Activated CD4-positive, alpha-beta T cell treated with anti-CD3 and anti-CD28 coated beads, Interleukin-2, amount 10 ng/mL, durations not matched to agents 7 days and 5 days (primary cell): ENCODE measurements at regions of chr19 and their contacts with region 1.

Region 1: GRCh38 chr19:6362027-6362350 is 658 bp downstream of the CLPP start:
- DNase-seq: no peak
- H3K4me3 Mint-ChIP-seq: peak overlapping the region; percentile 91
- H3K27ac Mint-ChIP-seq: peak overlapping the region; percentile 99
- H3K4me1 Mint-ChIP-seq: peaks cover 20% of the 10 kb centered on the region
- H3K27me3 Mint-ChIP-seq: no peaks in the 10 kb centered on the region

Region 2: DNA sequence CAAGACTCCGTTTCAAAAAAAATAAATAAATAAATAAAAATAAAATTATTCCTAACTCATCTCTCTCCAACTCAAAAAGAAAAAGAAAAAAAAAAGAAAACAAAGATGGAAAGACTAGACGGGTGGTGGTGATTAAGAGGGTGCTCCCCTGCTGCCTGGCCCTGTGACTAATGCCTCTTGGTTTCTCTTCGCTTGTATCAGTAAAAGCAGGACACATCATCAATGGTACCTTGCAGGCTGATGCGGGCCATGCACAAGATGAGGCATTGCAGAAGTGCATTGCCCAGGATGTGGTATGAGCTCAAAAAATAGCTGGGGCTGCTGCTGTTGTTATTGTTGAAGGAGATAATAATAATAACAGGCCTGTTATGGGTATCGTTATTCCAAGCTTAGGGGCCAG is 43.2 kb before region 1 on chr19:
- CTCF ChIA-PET with region 1: no interaction called
- POLR2A ChIA-PET with region 1: no interaction called
- DNase-seq: no peak
- H3K4me3 Mint-ChIP-seq: no peak overlapping the region
- H3K27ac Mint-ChIP-seq: no peak overlapping the region
- H3K4me1 Mint-ChIP-seq: no peaks in the 10 kb centered on the region
- H3K27me3 Mint-ChIP-seq: no peaks in the 10 kb centered on the region

Region 3: GRCh38 chr19:6340493-6341201 is 21.3 kb before region 1 on chr19:
- CTCF ChIA-PET with region 1: no interaction called
- POLR2A ChIA-PET with region 1: no interaction called
- DNase-seq: no peak
- H3K4me3 Mint-ChIP-seq: no peak overlapping the region
- H3K27ac Mint-ChIP-seq: no peak overlapping the region
- H3K4me1 Mint-ChIP-seq: no peaks in the 10 kb centered on the region
- H3K27me3 Mint-ChIP-seq: no peaks in the 10 kb centered on the region

Region 4: DNA sequence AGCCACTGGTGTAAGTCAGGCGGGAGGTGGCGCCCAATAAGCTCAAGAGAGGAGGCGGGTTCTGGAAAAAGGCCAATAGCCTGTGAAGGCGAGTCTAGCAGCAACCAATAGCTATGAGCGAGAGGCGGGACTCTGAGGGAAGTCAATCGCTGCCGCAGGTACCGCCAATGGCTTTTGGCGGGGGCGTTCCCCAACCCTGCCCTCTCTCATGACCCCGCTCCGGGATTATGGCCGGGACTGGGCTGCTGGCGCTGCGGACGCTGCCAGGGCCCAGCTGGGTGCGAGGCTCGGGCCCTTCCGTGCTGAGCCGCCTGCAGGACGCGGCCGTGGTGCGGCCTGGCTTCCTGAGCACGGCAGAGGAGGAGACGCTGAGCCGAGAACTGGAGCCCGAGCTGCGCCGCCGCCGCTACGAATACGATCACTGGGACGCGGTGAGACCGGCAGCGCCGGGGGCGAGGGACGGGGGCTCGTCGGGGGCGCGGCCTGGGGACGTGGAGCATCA is 10.7 kb after region 1 on chr19 and contains the start of gene ALKBH7:
- CTCF ChIA-PET with region 1: interaction called, 15 read pairs
- POLR2A ChIA-PET with region 1: interaction called, 19 read pairs
- DNase-seq: peak; percentile 99
- H3K4me3 Mint-ChIP-seq: peak within 1 kb of the TSS; percentile 89
- H3K27ac Mint-ChIP-seq: peak within 1 kb of the TSS; percentile 95
- H3K4me1 Mint-ChIP-seq: peaks cover 16% of the 10 kb centered on the region
- H3K27me3 Mint-ChIP-seq: no peaks in the 10 kb centered on the region
- total RNA-seq, gene ALKBH7: 32.8 to 48.2 TPM